ENCODE measurements at regions of chr4 and their contacts with region 1.

Region 1: DNA sequence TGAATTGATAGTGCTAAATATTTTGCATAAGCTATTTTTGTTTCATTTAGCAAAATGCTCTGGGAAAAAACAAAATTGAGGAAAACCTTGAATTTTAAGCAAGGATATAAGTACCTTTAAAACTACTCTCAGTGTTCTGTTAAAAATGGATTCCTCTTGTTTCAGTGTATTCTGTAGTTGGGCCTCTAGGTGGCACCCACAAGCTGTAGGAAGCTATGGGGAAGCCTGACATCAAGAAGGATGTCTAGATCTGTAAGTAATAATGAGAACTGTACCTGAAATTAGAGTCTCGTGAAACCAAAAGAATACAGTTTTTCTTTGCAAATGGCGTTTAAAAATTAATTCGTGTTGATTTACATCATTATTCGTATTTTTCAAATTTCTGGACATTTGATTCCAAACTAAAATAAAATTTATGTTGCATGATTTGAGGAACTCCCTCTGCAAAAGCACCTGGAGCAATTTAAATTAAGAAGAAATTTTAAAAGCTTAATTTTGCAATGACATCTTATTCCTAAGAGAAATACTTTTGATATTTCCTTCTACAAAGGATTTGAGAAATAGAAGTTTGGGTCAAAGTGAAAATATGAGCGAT is 51.2 kb downstream of the TMPRSS11E start:
- DNase-seq: peak; percentile 76
- H3K4me3 ChIP-seq: no peak overlapping the region
- H3K27ac ChIP-seq: no peak overlapping the region
- H3K4me1 ChIP-seq: no peaks in the 10 kb centered on the region
- H3K27me3 ChIP-seq: no peaks in the 10 kb centered on the region
- CTCF ChIP-seq: peak; percentile 83

Region 2: GRCh38 chr4:67456577-67457196 is 1041.8 kb before region 1 on chr4:
- intact Hi-C with region 1: no loop called
- DNase-seq: peak; percentile 53
- H3K4me3 ChIP-seq: no peak overlapping the region
- H3K27ac ChIP-seq: no peak overlapping the region
- H3K4me1 ChIP-seq: no peaks in the 10 kb centered on the region
- H3K27me3 ChIP-seq: no peaks in the 10 kb centered on the region
- CTCF ChIP-seq: no peak

Region 3: GRCh38 chr4:69025191-69025998 is 526.9 kb after region 1 on chr4:
- intact Hi-C with region 1: loop called (anchors 10 kb)
- DNase-seq: peak; percentile 37
- H3K4me3 ChIP-seq: no peak overlapping the region
- H3K27ac ChIP-seq: no peak overlapping the region
- H3K4me1 ChIP-seq: no peaks in the 10 kb centered on the region
- H3K27me3 ChIP-seq: no peaks in the 10 kb centered on the region
- CTCF ChIP-seq: no peak

Region 4: DNA sequence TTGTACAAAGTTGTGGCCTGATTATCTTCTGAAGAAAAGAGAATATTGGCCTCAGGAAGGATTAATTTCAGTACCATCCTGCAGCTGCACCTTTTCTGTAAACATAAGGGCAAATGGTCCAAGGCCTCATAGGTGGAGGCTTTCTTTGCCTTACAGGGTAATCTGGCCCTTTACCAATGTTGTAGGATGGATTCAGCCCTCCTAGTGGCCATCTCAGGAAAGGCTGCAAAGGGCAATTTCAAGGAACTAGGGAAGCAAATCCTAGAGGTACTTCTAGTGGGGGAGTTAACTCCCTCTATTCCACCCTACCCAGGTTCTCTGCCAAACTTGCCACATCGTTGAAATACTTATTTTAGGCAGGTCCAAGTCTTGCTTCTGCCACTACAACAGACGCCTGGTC is 658.4 kb after region 1 on chr4:
- intact Hi-C with region 1: loop called (anchors 5 kb)
- DNase-seq: no peak
- H3K4me3 ChIP-seq: no peak overlapping the region
- H3K27ac ChIP-seq: no peak overlapping the region
- H3K4me1 ChIP-seq: no peaks in the 10 kb centered on the region
- H3K27me3 ChIP-seq: no peaks in the 10 kb centered on the region
- CTCF ChIP-seq: no peak

Measured in colonic mucosa (tissue), 4 donors.